ENCODE measurements at regions of chr1 and their contacts with region 1.

Region 1: GRCh38 chr1:177948336-177948972 is 21.4 kb downstream of the SEC16B start:
- DNase-seq: no peak
- H3K4me3 Mint-ChIP-seq: no peak overlapping the region
- H3K27ac Mint-ChIP-seq: no peak overlapping the region
- H3K4me1 Mint-ChIP-seq: peaks cover 2% of the 10 kb centered on the region
- H3K27me3 Mint-ChIP-seq: no peaks in the 10 kb centered on the region

Region 2: DNA sequence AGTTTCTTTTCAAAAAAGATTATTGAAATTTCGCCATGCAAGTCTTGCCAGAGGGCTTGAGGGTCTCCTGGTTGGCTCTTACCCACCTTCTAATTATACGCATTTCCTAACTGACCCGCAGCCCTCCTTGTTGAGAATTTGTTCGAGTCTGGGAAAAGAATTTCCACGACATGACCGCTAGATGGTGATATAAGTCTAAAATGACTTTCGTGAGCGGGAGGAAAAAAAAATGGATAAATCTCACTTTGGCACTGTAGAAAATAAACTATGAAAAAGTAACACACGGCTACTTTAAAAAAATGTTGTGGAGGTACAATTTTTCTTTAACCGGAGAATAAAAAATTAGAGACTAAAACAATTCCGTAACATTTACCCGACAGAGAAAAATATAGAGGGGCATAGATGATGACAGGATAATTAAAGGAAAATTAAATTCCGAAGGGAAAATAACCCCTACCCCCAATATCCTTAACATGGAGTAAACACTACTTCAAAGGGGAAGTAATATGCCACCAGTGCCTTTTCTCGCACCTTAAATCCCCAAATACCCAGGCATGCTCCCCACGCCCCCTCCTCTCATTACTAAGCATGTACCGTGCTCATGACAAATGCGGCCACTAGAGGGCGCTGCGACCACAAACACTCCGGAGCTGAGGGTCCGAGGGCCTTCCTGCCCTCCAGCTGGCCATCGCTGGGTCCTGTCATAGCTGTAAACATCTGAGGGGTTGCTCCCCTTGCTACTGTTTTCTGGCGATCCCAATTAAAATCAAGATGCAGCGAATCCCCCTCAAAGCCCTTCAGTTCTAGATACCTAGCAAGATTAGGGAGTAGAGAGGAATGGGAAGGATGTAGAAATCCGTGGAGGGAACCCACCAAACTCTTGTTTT is 1050.9 kb before region 1 on chr1:
- intact Hi-C with region 1: loop called (anchors 2 kb)
- DNase-seq: peak; percentile 15
- H3K4me3 Mint-ChIP-seq: no peak overlapping the region
- H3K27ac Mint-ChIP-seq: no peak overlapping the region
- H3K4me1 Mint-ChIP-seq: peaks cover 4% of the 10 kb centered on the region
- H3K27me3 Mint-ChIP-seq: peaks cover 2% of the 10 kb centered on the region

Region 3: DNA sequence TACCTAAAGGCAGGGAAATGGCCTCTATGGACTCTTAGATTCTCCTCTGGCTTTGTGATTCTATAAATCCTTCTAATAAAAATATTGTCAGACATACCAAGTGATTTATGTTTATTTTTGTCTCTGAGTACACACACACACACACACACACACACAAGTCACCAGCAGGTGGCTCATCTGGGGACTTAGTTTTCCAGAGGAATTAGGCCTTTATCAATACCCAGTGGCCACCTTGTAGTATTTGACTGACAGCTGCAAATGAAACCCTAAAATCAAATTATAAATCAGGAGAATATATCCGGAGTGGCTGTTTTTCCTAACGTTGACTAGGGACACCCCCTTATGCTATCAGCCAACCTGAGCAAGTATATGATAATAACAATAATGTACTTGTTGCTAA is 519.2 kb before region 1 on chr1:
- intact Hi-C with region 1: loop called (anchors 10 kb)
- DNase-seq: no peak
- H3K4me3 Mint-ChIP-seq: no peak overlapping the region
- H3K27ac Mint-ChIP-seq: no peak overlapping the region
- H3K4me1 Mint-ChIP-seq: no peaks in the 10 kb centered on the region
- H3K27me3 Mint-ChIP-seq: no peaks in the 10 kb centered on the region

Region 4: GRCh38 chr1:178282949-178283367 is 334.5 kb after region 1 on chr1:
- intact Hi-C with region 1: loop called (anchors 5 kb)
- DNase-seq: no peak
- H3K4me3 Mint-ChIP-seq: no peak overlapping the region
- H3K27ac Mint-ChIP-seq: no peak overlapping the region
- H3K4me1 Mint-ChIP-seq: peaks cover 2% of the 10 kb centered on the region
- H3K27me3 Mint-ChIP-seq: no peaks in the 10 kb centered on the region

Measured in activated T-helper 2 cell treated with anti-CD3 and anti-CD28 coated beads, Interferon-gamma antibody, Interleukin-2, Interleukin-4, amounts not matched to agents 10 μg/mL and 5 μg/mL and 100 μg/mL, durations not matched to agents 14 hours and 24 hours and 36 hours (primary cell).